ENCODE measurements at regions of chr3 and their contacts with region 1.

Region 1: GRCh38 chr3:141311496-141312353 is 56.6 kb upstream of the ZBTB38 start:
- DNase-seq: peak; percentile 99
- H3K4me3 Mint-ChIP-seq: peak overlapping the region; percentile 95
- H3K27ac Mint-ChIP-seq: peak overlapping the region; percentile 96
- H3K4me1 Mint-ChIP-seq: peaks cover 55% of the 10 kb centered on the region
- H3K27me3 Mint-ChIP-seq: no peaks in the 10 kb centered on the region

Region 2: GRCh38 chr3:140941434-140942220 is 370.1 kb before region 1 on chr3 and contains the start of gene SLC25A36:
- intact Hi-C with region 1: loop called (anchors 5 kb)
- DNase-seq: peak; percentile 98
- H3K4me3 Mint-ChIP-seq: peak within 1 kb of the TSS; percentile 97
- H3K27ac Mint-ChIP-seq: peak within 1 kb of the TSS; percentile 96
- H3K4me1 Mint-ChIP-seq: peaks cover 27% of the 10 kb centered on the region
- H3K27me3 Mint-ChIP-seq: peaks cover 25% of the 10 kb centered on the region
- total RNA-seq, gene SLC25A36: 56.3 and 58.9 TPM in 2 replicates

Region 3: DNA sequence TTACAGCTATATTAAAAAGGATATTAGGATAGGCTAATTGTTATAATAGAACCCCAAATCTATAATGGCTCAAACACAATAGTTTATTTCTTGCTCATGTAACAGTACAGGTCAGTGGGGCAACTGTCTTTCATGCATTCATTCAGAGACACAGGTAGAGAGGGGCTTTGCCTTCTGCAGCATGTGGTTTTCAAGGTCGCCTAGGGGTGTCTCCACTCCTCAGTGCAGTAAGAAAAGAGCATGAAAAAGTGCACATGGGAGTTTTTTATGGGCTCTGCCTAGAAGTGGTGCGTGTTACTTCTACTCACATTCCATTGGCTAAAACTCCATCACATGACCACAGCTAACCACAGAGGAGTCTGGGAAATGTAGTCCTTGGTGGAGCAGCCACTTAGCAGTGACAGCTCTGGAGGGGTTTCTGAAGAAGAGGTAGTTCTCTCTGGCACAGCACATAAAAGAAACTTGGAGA is 58.4 kb after region 1 on chr3:
- intact Hi-C with region 1: loop called (anchors 2 kb)
- DNase-seq: peak; percentile 89
- H3K4me3 Mint-ChIP-seq: no peak overlapping the region
- H3K27ac Mint-ChIP-seq: no peak overlapping the region
- H3K4me1 Mint-ChIP-seq: peaks cover 20% of the 10 kb centered on the region
- H3K27me3 Mint-ChIP-seq: no peaks in the 10 kb centered on the region

Region 4: DNA sequence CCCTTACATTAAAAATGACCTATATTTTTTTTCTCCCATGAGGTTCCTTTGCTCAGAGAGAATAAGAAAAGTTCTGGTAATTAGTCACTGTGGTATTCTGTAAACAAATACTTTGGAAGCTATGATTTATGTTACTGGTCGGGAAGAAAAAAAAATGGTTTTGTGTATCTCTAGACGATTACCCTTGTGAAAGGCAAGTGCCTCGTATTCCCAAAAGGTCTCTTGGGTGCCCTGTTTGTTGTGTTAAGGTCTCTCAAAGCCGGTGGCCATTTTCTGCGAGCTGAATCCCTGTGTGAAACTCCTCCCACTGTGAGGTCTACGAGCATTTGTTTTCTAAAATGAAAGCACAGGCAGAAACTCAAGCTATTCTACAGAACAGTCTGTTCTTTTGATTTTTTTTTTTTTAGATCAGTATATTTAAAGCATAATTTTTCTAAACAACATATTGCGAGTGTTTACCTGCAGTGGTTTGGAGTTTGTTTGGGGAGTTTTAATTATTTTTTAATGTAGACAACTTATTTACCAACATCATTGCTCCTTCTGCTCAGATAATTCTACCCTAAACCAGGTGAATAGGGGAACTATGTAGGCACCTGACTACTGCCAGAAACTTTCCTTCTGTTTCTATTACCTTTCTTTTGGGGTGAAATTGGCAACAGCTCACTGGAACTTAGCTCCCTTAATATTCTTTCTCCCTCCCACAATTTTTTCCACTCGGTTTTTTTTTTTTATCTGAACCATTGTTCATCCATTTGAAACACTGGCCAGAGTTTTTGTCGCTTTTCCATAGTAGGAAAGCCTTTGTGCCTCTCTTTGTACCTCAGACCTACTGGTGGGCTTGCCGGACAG is 100.6 kb after region 1 on chr3:
- intact Hi-C with region 1: loop called (anchors 2 kb)
- DNase-seq: peak; percentile 88
- H3K4me3 Mint-ChIP-seq: peak overlapping the region; percentile 83
- H3K27ac Mint-ChIP-seq: peak overlapping the region; percentile 99
- H3K4me1 Mint-ChIP-seq: peaks cover 48% of the 10 kb centered on the region
- H3K27me3 Mint-ChIP-seq: no peaks in the 10 kb centered on the region

Region 5: DNA sequence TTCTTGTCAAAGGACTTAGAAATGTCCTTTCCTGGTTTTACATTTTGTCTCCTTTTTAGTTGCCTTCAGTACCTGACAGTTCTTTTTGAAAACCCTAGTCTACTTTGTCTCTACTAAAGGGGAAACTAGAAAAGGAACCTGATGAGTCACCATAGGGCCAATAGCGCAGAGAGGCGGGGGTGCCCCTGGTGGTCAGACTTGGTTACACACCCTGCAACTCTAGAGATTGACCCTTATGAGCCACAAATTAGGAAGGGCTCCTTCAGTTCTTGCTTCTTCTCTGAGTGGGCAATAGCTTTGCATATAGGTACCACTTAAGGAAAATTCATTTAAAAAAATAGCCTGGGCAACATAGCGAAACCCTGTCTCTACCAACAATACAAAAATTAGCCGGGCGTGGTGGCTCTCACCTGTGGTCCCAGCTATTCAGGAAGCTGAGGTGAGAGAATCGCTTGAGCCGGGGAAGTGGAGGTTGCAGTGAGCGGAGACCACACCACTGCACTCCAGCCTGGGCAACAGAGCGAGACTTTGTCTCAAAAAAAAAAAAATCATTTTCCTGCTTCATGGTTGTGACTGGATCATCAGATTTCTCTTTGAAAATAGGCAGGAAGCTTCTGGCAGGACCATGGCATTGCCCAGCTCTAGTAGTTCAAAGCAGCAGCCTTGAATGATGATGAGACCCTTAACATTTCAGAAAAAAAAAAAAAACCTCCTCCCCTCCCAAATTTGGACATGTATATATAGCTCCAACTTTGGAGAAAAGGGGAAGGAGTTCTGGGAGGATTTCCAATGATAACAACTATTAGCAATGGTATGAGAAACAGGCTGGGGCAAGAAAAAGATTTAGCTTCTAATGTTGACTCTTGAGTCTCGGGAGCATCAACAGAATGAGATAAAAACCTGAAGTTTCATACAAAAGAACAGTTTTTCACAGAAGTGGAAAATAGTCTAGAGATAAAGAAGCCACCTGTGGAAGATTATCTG is 129.9 kb after region 1 on chr3:
- intact Hi-C with region 1: loop called (anchors 1 kb)
- DNase-seq: peak; percentile 90
- H3K4me3 Mint-ChIP-seq: no peak overlapping the region
- H3K27ac Mint-ChIP-seq: peak overlapping the region; percentile 16
- H3K4me1 Mint-ChIP-seq: peaks cover 13% of the 10 kb centered on the region
- H3K27me3 Mint-ChIP-seq: no peaks in the 10 kb centered on the region

Region 6: GRCh38 chr3:141452036-141452435 is 140.3 kb after region 1 on chr3:
- intact Hi-C with region 1: loop called (anchors 1 kb)
- DNase-seq: peak; percentile 86
- H3K4me3 Mint-ChIP-seq: no peak overlapping the region
- H3K27ac Mint-ChIP-seq: no peak overlapping the region
- H3K4me1 Mint-ChIP-seq: peaks cover 6% of the 10 kb centered on the region
- H3K27me3 Mint-ChIP-seq: no peaks in the 10 kb centered on the region

Region 7: GRCh38 chr3:141561426-141562034 is 249.8 kb after region 1 on chr3:
- intact Hi-C with region 1: loop called (anchors 5 kb)
- DNase-seq: peak; percentile 87
- H3K4me3 Mint-ChIP-seq: no peak overlapping the region
- H3K27ac Mint-ChIP-seq: no peak overlapping the region
- H3K4me1 Mint-ChIP-seq: peaks cover 13% of the 10 kb centered on the region
- H3K27me3 Mint-ChIP-seq: no peaks in the 10 kb centered on the region